ENCODE measurements at regions of chr1 and their contacts with region 1.

Region 1: DNA sequence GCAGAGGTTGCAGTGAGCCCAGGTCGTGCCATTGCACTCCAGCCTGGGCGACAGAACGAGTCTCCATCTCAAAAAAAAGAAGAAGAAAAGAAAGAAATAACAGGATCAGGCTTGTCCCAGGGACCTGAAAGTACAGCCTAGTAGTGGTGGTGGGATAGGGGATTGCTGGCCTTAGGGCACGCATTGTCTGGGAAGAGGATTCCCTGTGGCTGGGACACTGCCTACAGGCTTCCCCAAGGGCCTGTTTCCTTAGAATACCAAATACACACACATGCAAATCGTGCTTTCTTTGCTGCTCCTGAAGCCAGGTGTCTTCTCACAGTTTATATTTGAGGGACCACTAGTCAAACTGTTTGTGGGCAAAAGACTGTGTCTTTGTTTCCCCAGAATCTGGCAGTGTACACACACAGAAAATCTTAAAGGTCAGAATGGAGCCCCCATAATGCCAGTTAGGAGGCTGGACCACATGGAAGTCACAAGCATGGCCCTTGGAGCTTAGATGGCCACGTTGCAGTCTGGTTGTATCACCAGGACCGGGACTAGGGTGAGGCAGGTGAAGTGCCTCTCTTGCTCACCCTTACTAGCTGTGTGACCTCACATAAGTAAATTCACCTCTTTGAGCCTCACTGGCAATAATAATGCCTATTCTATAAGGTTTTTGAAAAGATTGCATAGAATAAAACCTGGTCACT is 12.7 kb upstream of the ASAP3 start:
- DNase-seq: no peak
- ATAC-seq: peak in 1 of 2 donors; percentile 16
- H3K4me3 ChIP-seq: no peak overlapping the region
- H3K27ac ChIP-seq: no peak overlapping the region
- H3K4me1 ChIP-seq: no peaks in the 10 kb centered on the region
- H3K27me3 ChIP-seq: no peaks in the 10 kb centered on the region

Region 2: GRCh38 chr1:23428136-23428905 is 68.3 kb before region 1 on chr1:
- intact Hi-C with region 1: no loop called
- DNase-seq: no peak
- ATAC-seq: no peak
- H3K4me3 ChIP-seq: no peak overlapping the region
- H3K27ac ChIP-seq: no peak overlapping the region
- H3K4me1 ChIP-seq: peaks cover 4% of the 10 kb centered on the region
- H3K27me3 ChIP-seq: no peaks in the 10 kb centered on the region

Region 3: DNA sequence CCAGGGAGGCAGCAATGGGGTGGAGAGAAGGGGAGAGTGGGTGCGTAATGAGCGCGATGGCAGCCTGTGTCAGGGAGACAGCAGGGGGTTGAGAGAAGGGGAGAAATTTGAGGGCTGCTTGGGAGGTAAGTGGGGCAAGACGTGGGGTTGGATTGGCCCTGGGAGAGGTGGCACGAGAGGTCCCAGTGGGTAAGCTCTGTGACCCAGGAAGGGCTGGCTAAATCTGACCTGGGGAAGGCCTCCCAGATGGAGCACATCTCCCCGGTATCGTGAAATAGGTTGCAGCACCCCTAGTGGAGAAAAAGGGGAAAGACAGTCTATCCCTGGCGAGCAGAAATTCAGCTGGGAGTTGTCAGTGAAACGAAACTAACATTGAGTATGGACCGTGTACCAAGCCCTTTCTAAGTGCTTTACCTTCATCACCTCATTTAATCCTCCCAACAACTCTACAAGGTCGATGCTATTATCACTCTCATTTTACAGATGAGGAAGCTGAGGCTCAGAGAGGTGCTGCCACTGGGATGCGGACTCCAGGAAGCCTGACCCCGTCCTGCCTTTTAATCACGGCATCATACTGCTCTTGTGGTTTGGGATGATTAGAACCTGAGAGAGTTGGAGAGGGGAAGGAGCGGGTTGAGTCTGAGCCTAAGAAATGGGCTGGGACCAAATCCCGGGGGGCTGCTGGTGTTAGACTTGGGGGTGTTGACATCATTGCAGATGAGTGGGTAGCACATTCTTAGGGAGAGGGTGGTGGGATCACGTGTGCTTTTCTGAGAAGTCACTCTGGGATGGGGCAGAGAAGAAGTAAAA is 138.4 kb after region 1 on chr1:
- intact Hi-C with region 1: loop called in 1 of 4 experiments (anchors 5 kb)
- DNase-seq: peak; percentile 76 to 87 (median 82)
- ATAC-seq: peak; percentile 65 to 74
- H3K4me3 ChIP-seq: peak overlapping the region; percentile 43
- H3K27ac ChIP-seq: peak overlapping the region; percentile 88
- H3K4me1 ChIP-seq: peaks cover 3% of the 10 kb centered on the region
- H3K27me3 ChIP-seq: no peaks in the 10 kb centered on the region

Region 4: DNA sequence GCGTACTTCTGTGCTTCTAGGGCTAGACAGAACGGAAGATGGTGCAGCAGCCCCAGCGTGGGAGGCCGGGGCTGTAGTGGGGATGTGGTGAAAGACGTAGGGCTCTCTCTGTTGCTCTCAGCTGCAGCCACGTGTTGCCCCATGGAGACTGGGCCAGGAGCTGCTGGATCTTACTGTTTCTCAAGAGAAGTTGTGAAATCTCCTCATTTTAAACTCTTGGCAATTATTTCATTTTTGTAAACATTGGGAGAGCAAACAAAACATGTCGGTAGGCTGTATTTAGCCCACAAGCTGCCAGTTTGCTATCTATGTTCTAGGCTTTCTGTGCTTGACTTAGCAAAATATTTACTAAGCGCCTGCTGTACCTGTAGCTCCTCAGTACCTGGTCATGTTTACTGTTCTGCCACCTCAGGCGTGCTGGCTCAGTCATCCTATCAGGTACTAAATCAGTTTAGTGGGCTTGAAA is 230.8 kb after region 1 on chr1:
- intact Hi-C with region 1: no loop called
- DNase-seq: peak; percentile 81 to 90 (median 85)
- ATAC-seq: peak; percentile 94 to 95
- H3K4me3 ChIP-seq: no peak overlapping the region
- H3K27ac ChIP-seq: peak overlapping the region; percentile 21
- H3K4me1 ChIP-seq: no peaks in the 10 kb centered on the region
- H3K27me3 ChIP-seq: no peaks in the 10 kb centered on the region